ENCODE measurements at regions of chr1 and their contacts with region 1.

Region 1: DNA sequence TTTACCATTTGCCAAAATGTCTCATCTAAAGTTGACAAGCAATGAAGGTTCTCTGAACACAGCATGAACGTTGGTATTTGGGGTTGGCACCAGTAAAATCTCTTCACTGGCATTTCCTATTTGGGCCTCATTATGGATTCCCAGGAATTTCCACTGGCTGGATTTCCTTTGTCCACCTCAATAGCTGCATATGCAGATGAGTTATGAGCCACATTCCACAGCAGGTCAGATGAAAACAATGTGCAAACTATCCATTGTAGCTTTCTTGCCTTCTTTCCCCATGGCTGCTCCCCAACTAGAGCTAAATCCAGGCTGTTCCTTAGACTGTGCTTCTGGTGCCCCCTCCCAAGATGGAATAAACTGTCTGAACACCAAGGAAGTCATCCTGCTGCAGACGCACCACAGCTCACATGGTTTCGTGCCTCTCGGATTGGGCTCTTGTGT is 168.1 kb upstream of the FGGY start:
- DNase-seq: no peak
- H3K4me3 ChIP-seq: no peak overlapping the region
- H3K27ac ChIP-seq: peak overlapping the region; percentile 20
- H3K4me1 ChIP-seq: peaks cover 31% of the 10 kb centered on the region
- H3K27me3 ChIP-seq: no peaks in the 10 kb centered on the region
- CTCF ChIP-seq: no peak

Region 2: DNA sequence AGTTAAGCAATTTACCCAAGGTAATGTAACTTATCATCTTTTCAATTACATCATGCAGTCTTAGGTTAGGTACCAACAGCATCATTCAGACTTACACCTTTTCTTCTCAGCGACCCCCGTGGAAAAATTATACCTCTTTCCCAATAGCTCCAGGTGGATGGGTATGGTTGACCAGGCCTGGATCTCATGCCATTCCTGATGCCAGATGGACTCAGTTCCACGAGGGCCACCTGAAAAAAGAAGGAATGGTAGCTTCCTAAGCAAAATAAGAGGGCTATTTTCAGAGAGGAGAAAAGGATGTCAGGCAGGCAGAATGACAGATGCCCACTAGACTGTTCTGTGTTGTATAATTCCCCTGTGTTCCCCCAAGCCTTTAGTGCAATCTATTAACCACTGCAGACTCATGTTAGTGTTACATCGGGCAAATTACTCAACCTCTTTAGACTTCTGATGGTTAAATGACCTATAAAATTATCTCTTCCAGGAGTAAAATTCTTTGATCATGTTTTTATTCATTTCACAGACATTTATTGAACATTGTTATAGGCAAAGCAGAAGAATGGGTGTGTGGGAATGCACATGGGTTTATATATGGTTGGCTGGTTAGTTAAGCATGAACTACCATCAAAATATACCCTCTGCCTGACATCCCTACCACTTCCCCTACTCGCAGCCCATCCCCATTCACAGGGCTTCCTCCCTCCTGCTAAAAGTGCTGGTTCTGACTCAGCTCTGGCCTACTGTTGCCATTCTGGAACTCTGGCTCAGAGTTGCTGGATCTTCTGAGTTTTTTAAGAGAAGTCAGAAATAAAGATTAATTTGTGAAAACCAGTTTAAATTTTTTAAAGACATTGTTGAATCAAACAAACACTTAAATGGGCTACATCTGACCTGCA is 418.4 kb before region 1 on chr1:
- CTCF ChIA-PET with region 1: no interaction called
- POLR2A ChIA-PET with region 1: interaction called, 10 read pairs
- intact Hi-C with region 1: no loop called
- DNase-seq: no peak
- H3K4me3 ChIP-seq: no peak overlapping the region
- H3K27ac ChIP-seq: no peak overlapping the region
- H3K4me1 ChIP-seq: peaks cover 10% of the 10 kb centered on the region
- H3K27me3 ChIP-seq: no peaks in the 10 kb centered on the region
- CTCF ChIP-seq: no peak

Region 3: DNA sequence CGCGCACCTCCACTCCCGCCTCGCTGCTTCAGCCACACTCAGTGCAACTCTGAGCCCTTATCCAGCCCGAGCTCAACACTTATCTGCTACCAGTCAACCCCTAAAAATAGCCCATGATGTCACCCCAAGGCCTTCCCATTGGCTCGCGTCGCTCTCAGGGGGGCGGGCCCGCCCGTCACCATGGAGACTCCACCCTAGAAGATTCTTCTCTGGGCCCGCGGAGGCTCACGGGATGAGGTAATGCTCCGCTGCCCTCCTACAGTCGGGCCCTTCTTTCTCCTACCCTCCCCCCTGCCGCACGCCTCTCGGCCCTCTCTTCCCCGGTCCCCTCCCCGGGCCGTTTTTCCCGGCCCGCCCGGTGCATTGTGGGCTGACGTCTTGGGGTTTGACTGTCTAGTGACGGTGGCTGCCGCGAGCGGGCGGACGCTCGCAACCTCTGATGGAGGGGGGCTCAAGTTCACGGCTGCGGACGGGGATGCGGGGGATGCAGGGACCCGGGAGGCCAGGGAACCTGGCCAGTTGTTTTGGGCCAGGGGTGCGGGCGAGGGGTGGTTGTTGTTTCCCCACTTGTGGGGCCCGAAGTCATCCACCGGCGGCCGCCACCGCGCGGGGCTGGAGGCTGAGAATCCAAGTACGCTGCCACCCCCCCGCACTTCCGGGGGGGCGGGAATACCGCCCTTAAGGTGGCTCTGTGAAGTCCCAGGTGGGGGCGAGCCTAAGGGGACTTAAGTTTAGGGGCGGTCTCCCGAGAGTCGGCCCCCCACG is 344.6 kb before region 1 on chr1 and contains the start of gene JUN:
- CTCF ChIA-PET with region 1: no interaction called
- POLR2A ChIA-PET with region 1: no interaction called
- intact Hi-C with region 1: loop called (anchors 5 kb)
- DNase-seq: peak; percentile 99
- H3K4me3 ChIP-seq: peak within 1 kb of the TSS; percentile 63
- H3K27ac ChIP-seq: peak within 1 kb of the TSS; percentile 87
- H3K4me1 ChIP-seq: peaks cover 32% of the 10 kb centered on the region
- H3K27me3 ChIP-seq: peaks cover 3% of the 10 kb centered on the region
- CTCF ChIP-seq: no peak
- total RNA-seq, gene JUN: 16.9 and 24.9 TPM in 2 replicates

Region 4: GRCh38 chr1:59071289-59071688 is 57.5 kb before region 1 on chr1:
- CTCF ChIA-PET with region 1: no interaction called
- POLR2A ChIA-PET with region 1: no interaction called
- intact Hi-C with region 1: loop called (anchors 5 kb)
- DNase-seq: peak; percentile 43
- H3K4me3 ChIP-seq: no peak overlapping the region
- H3K27ac ChIP-seq: no peak overlapping the region
- H3K4me1 ChIP-seq: peaks cover 25% of the 10 kb centered on the region
- H3K27me3 ChIP-seq: no peaks in the 10 kb centered on the region
- CTCF ChIP-seq: no peak

Measured in A673 (cell line).